ENCODE measurements at regions of chr1 and their contacts with region 1.

Region 1: DNA sequence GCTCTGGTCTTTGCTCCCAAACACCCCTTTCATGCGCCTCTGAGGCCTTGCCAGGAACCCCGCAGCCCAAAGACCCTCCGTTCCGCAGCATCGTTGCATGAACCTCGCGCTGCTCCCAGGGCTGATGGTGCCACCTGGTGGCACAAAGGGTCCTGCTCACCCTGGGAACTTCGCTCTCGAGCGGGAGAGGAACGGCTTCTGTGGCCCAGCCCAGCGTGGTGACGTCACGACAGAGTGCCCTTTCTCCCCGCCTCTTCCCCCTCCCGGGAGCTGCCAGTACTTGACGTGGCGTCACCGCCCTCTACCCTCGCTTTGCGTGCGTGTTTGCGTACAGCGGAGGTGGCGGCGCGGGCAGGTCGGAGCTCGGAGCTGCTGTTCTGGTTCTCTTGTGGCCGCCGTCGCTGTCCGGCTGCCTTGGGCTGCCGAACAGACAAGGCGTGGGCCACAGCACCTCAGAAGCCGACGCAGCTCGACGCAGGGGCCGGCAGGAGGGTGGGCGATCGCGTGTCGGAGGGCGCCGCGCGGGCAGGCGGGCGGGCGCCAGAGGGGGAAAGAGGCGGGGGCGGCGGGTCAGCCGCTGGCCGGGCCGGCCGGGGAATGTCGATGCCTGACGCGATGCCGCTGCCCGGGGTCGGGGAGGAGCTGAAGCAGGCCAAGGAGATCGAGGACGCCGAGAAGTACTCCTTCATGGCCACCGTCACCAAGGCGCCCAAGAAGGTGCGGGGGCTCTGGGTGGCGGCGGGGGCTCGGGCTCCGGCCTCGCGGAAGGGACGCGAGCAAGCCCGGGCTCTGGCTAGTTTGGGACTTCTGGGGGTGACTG is at the start of gene AHCYL1:
- DNase-seq: peak; percentile 98
- H3K4me3 ChIP-seq: peak within 1 kb of the TSS; percentile 70 to 95 (median 78)
- H3K27ac ChIP-seq: peak within 1 kb of the TSS; percentile 92 to 97 (median 95)
- H3K4me1 ChIP-seq: peaks cover 29 to 72% (median 50%) of the 10 kb centered on the region in 3 donors
- H3K27me3 ChIP-seq: no peaks in the 10 kb centered on the region
- CTCF ChIP-seq: peak; percentile 97 to 99 (median 99)
- POLR2A ChIP-seq: peak in 3 of 4 donors; percentile 84 to 98 (median 98)
- total RNA-seq, gene AHCYL1: 49.7 to 60.3 (median 53.0) TPM

Region 2: DNA sequence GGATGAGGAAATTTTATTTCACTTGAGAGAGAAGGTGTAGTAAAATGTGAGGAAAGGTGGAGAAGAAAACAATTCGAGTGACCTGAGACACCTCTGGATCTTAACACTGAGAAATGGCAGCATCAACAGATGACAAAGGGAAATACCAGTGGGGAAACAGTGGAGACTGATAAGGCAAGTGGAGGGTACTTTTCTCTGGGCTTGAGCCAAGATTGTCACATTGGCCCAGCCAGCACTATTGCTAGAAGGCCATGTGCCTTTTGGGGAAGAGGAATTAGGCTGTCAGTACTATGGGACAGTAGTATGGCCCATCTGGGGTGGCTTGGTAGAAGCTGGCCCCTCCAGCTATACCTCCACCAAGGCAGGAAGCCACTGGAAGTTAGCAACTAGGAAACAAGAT is 510.0 kb before region 1 on chr1:
- intact Hi-C with region 1: no loop called
- DNase-seq: no peak
- H3K4me3 ChIP-seq: no peak overlapping the region
- H3K27ac ChIP-seq: no peak overlapping the region
- H3K4me1 ChIP-seq: no peaks in the 10 kb centered on the region
- H3K27me3 ChIP-seq: peaks cover 0 to 46% (median 2%) of the 10 kb centered on the region in 4 donors
- CTCF ChIP-seq: no peak
- POLR2A ChIP-seq: no peak

Region 3: DNA sequence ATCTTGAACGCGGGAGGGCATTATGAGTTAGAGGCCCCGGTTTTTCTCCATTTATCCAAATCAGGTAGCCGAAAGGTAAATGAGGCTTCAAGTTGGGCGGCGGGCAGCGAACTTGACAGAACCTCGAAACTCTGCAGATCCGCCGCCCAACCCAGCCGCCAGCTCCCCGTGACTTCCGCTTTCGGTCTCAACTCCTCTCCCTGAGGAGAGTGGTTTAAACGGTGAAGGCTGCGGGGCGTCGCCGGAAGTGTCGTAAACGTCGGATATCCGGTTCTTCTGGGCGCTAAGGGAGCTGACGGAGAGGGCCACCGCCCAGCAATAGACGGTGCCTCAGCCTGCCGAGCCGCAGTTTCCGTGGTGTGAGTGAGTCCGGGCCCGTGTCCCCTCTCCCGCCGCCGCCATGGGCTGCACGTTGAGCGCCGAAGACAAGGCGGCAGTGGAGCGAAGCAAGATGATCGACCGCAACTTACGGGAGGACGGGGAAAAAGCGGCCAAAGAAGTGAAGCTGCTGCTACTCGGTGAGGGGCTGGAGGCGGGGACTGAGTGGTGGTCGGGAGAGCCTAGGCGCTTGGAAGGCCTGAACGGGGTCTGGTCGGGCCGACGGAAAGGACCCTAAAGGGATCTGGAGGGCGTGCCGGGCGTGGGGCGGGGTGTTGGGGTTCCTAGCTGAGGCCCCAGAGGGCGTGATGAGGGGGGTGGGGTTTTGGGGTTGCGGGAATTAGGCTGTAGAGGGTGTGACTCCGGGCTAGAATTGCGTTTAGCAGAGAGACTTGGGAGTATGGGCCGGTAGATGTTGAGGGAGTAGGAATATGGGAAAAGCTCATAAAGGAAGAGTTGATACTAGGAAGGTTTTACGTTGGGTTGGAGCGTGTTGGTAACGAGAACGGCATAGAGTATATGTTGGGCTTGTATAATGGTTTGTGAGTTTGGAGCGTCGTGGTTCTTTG is 436.1 kb before region 1 on chr1 and contains the start of gene GNAI3:
- intact Hi-C with region 1: loop called (anchors 10 kb)
- DNase-seq: peak; percentile 84
- H3K4me3 ChIP-seq: peak within 1 kb of the TSS; percentile 87 to 96 (median 94)
- H3K27ac ChIP-seq: peak within 1 kb of the TSS; percentile 97 to 99 (median 98)
- H3K4me1 ChIP-seq: peaks cover 7 to 56% (median 22%) of the 10 kb centered on the region in 3 donors
- H3K27me3 ChIP-seq: no peaks in the 10 kb centered on the region
- CTCF ChIP-seq: peak in 2 of 6 experiments; percentile 2 to 28
- POLR2A ChIP-seq: peak in 3 of 4 donors; percentile 96 to 99 (median 99)
- total RNA-seq, gene GNAI3: 8.2 to 15.1 (median 11.6) TPM

Region 4: DNA sequence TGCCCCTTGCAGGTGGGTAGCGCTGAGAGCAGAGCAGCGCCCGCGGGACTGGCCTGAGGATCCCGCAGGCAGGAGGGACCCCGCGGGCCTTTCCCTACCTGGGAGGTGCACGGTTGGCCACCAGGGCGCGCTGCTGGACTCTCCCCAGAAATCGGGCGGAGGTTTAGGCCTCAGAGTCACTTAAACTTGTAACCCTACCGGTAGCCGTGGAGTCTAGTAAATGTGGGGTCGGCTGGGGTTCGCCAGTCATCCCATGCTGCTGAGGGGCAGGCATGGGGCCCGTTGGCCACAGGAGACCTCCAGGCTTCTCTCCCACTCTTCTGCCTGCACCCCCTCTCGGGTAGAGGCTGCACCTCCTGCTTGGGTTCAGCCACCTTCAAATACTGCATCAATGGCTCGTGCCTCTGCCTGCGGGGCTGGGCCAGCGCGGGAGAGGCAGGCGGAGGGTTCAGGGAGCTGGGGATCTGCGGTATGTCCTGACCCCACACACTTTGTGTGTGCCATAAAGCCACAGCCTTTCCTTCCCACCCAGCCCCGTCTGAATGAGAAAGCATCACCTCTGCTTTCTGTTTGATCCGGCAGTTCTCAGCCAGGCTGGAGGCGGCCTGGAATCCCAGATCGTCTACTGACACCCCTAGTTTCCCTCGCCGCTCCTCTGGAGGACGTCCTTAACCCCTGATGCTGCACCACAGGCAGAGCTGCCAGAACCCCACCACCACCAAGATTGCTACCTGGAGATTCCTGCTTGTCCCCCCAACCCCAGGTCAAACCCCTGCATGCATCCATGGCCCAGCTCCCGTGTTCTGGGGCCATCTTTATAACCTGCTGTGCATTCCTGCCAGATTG is 341.1 kb before region 1 on chr1:
- intact Hi-C with region 1: loop called (anchors 5 kb)
- DNase-seq: no peak
- H3K4me3 ChIP-seq: peak overlapping the region in 1 of 4 donors; percentile 29
- H3K27ac ChIP-seq: no peak overlapping the region
- H3K4me1 ChIP-seq: peaks cover 0 to 15% (median 7%) of the 10 kb centered on the region in 3 donors
- H3K27me3 ChIP-seq: no peaks in the 10 kb centered on the region
- CTCF ChIP-seq: peak; percentile 90 to 96 (median 92)
- POLR2A ChIP-seq: no peak